ENCODE measurements at regions of chr1 and their contacts with region 1.

Region 1: DNA sequence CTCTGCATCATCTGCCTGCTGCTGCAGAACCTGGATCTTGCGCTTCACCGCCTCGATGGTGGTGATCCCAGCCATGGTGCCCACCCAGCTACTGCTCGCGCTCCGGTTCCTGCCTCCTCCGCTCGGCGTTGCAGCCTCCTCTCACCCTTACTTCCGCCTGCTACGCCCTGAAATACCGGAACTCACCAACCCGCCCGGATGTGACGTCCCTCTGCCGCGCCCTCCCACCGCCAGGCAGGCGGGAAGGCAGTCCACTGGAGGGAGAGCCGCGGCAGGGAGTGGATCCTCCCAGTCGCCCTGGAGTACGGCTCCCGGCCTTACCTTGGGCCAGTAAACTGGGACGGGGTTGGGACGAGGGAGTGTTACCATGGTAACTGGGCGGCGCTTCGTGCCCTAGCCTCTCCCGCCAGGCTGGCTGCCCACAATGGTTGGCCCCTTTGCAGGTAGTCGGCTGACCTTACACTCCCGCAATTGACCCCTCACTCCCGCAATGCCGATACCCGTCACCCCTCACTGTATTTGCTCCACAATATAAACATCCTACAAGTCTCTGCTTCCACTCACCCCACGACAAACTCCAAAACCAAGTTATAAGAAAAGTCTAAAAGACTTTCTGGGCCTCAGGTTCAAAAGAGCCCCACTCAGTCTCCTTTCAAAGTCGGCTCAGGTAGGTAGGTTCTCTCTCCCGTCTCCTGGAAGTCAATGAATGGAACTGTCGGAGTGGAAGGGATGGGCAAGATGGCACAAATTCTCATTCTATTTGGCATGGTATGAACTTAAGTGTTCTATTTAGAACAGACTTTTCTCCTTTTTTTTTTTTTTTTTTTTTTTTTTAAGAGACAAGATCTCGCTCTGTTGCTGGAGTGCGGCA is 8.6 kb downstream of the TPM3 start:
- DNase-seq: peak; percentile 94
- ATAC-seq: peak; percentile 73
- H3K4me3 ChIP-seq: peak overlapping the region; percentile 54 to 99 (median 98)
- H3K4me3 Mint-ChIP-seq: peak overlapping the region; percentile 91
- H3K27ac ChIP-seq: peak overlapping the region; percentile 91 to 96
- H3K27ac Mint-ChIP-seq: peak overlapping the region; percentile 98
- H3K4me1 ChIP-seq: peaks cover 39 to 46% of the 10 kb centered on the region in 2 donors
- H3K4me1 Mint-ChIP-seq: peaks cover 48% of the 10 kb centered on the region
- H3K27me3 ChIP-seq: no peaks in the 10 kb centered on the region
- H3K27me3 Mint-ChIP-seq: peaks cover 4% of the 10 kb centered on the region
- CTCF ChIP-seq: no peak

Region 2: DNA sequence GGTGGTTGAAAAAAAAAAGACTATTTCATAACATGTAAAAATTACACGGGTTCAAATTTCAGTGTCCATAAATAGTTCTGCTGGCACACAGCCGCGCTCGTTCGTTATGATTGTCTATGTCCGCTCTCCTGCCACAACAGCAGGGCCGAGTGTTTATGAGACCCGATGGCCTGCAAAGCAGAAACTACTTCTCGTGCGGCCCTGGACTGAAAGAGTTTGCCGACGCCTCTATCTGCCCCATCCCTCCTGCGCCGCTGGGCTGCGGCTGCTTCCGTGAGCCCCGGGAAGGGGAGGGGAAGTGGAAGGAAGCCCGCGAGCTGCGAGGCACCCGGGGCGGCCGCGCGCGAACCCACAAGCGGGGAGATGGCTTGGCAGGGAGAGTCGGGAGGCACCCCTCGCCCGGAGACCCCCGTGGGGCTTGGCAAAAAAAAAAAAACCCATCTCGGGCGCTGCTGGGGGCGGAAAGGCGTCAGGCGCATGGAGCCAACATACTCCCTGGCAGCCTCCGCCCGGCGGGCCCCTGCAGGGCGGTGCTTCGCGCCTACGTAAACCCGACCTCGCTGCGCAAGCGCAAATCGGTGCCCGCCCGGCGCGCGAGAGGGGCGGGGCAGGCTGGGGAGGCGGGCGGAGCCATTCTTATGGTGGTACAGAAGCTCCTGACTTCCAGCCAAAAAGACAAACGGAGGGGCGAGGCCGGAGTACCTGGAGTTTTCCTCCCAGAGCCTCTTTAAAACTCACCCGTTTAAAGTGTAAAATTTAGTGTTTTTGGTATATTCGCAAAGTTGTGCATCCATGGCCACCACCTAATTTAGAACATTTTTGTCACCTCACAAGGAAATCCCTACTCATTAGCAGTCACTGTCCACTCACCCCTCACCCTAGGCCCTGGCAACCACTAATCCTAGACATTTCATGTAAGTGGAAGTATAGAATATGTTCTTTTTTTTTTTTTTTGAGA is 399.8 kb before region 1 on chr1:
- CTCF ChIA-PET with region 1: no interaction called
- POLR2A ChIA-PET with region 1: no interaction called
- intact Hi-C with region 1: loop called (anchors 5 kb)
- DNase-seq: peak; percentile 95
- ATAC-seq: peak; percentile 97
- H3K4me3 ChIP-seq: peak overlapping the region; percentile 44 to 89 (median 76)
- H3K4me3 Mint-ChIP-seq: peak overlapping the region; percentile 97
- H3K27ac ChIP-seq: peak overlapping the region; percentile 94 to 95
- H3K27ac Mint-ChIP-seq: peak overlapping the region; percentile 93
- H3K4me1 ChIP-seq: peaks cover 7 to 23% of the 10 kb centered on the region in 2 donors
- H3K4me1 Mint-ChIP-seq: peaks cover 18% of the 10 kb centered on the region
- H3K27me3 ChIP-seq: no peaks in the 10 kb centered on the region
- H3K27me3 Mint-ChIP-seq: no peaks in the 10 kb centered on the region
- CTCF ChIP-seq: no peak

Region 3: DNA sequence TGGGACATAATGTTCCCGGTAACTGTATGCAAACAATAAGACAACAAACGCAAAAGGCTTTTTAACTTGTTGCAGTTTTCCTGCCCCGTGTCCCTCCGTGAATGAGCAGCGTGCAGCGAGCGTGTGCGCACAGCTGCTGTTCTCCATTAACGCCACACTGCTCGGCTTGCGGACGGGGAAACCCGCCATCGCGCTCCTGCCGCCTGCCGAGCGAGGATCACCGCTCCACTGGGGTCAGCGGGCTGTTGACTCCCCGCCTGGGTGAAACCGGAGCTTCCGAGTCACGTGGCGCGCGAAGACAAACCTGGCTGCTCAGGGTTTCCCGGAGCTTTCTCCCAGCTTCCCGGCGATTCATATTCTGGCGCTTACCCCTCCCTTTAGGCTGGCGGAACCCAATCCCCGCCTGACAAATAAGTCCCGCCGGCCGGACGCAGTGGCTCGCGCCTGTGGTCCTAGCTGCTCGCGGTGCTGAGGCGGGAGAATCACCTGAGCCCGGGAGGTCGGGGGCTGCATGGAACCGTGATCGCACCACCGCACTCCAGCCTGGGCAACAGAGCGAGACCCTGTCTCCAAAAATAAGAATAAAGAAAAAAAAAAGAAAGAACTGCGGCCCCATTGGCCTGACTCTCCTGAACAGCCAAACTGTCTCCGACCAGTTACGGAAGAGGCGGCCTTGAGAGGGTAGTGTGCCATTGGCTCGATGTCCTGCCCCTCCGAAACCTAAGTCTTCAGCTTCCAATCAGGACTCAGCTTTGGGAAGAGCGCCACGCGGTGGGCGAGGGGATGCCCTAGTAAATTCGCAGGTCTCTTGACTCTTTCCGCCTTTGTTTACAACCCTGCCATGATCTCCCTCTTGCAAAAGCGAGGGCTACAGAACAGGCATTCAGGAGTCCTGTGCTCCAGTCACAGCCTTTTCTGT is 215.9 kb before region 1 on chr1 and contains the start of gene CREB3L4:
- CTCF ChIA-PET with region 1: no interaction called
- POLR2A ChIA-PET with region 1: interaction called, 11 read pairs
- intact Hi-C with region 1: no loop called
- DNase-seq: peak; percentile 94
- ATAC-seq: peak; percentile 82
- H3K4me3 ChIP-seq: peak within 1 kb of the TSS; percentile 73 to 95 (median 90)
- H3K4me3 Mint-ChIP-seq: peak within 1 kb of the TSS; percentile 98
- H3K27ac ChIP-seq: peak within 1 kb of the TSS; percentile 91 to 94
- H3K27ac Mint-ChIP-seq: peak within 1 kb of the TSS; percentile 99
- H3K4me1 ChIP-seq: peaks cover 43 to 51% of the 10 kb centered on the region in 2 donors
- H3K4me1 Mint-ChIP-seq: peaks cover 49% of the 10 kb centered on the region
- H3K27me3 ChIP-seq: no peaks in the 10 kb centered on the region
- H3K27me3 Mint-ChIP-seq: no peaks in the 10 kb centered on the region
- CTCF ChIP-seq: peak; percentile 39
- total RNA-seq, gene CREB3L4: 19.9 and 21.8 TPM in 2 replicates

Region 4: DNA sequence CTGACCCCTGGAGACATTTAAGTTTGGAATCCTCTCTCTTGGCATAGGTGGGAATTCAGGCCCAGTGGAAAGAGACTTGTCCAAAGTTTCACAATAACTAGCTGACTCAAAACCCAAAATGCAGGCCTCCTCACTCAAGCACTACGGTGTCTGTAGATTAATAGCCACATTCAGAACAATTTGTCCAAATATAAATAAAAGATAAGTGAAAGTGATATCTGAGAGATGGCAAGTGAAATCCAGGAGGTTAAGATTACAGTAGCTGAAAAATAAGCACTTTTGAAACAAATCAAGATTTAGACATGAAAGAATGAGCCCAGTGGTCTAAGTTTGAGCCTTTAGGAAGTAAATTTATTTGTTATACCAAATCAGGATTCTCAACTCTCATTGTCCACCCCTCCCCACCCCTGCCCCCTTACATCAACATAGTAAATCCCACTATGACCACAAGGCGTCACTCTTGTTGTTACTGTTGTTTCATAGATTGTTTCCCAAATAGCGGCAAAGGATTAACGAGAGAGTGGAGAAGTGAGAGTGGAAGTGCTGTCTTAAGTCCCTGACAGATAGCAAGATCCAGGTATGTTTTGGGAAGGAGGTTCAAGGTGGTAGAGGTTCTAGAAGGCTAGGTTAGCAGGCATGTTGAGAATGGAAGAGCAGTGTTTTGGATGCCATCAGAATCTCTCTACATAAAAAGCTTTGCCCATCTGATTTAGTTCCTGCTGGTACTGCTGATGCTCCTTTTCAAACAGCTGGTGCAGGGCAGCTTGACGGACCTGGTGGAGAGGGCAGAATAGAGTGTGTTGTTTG is 15.7 kb after region 1 on chr1:
- CTCF ChIA-PET with region 1: interaction called, 21 read pairs
- POLR2A ChIA-PET with region 1: interaction called, 4 read pairs
- intact Hi-C with region 1: loop called (anchors 1 kb)
- DNase-seq: peak; percentile 77
- ATAC-seq: peak; percentile 76
- H3K4me3 ChIP-seq: no peak overlapping the region
- H3K4me3 Mint-ChIP-seq: no peak overlapping the region
- H3K27ac ChIP-seq: peak overlapping the region in 1 of 2 donors; percentile 28
- H3K27ac Mint-ChIP-seq: no peak overlapping the region
- H3K4me1 ChIP-seq: peaks cover 5 to 10% of the 10 kb centered on the region in 2 donors
- H3K4me1 Mint-ChIP-seq: no peaks in the 10 kb centered on the region
- H3K27me3 ChIP-seq: no peaks in the 10 kb centered on the region
- H3K27me3 Mint-ChIP-seq: peaks cover 4% of the 10 kb centered on the region
- CTCF ChIP-seq: peak; percentile 73

Region 5: GRCh38 chr1:154220071-154220969 is 37.0 kb after region 1 on chr1 and contains the start of gene UBAP2L:
- CTCF ChIA-PET with region 1: interaction called, 3 read pairs
- POLR2A ChIA-PET with region 1: interaction called, 10 read pairs
- intact Hi-C with region 1: loop called (anchors 1 kb)
- DNase-seq: peak; percentile 100
- ATAC-seq: peak; percentile 83
- H3K4me3 ChIP-seq: peak within 1 kb of the TSS; percentile 92 to 99 (median 95)
- H3K4me3 Mint-ChIP-seq: peak within 1 kb of the TSS; percentile 97
- H3K27ac ChIP-seq: peak within 1 kb of the TSS; percentile 98 to 100
- H3K27ac Mint-ChIP-seq: peak within 1 kb of the TSS; percentile 97
- H3K4me1 ChIP-seq: peaks cover 34 to 39% of the 10 kb centered on the region in 2 donors
- H3K4me1 Mint-ChIP-seq: peaks cover 66% of the 10 kb centered on the region
- H3K27me3 ChIP-seq: no peaks in the 10 kb centered on the region
- H3K27me3 Mint-ChIP-seq: no peaks in the 10 kb centered on the region
- CTCF ChIP-seq: no peak
- total RNA-seq, gene UBAP2L: 218 and 219 TPM in 2 replicates